IMR-90 (cell line): ENCODE measurements at regions of chr16 and their contacts with region 1.

Region 1: DNA sequence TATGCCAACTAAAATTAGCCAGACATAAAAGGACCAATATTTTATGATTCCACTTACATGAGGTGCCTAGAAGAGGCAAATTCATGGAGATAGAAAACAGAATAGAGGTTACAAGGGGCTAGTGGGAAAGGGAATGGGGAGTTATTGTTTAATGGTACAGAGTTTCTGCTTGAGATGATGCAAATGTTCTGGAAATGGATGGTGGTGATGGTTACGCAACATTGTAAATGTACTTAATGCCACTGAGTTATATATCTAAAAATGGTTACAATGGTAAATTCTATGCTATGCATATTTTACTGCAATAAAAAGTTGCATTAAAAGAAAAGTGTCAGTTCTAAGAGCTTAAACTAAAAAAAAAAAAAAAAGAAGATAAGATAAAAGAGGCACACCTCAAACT is 17.9 kb downstream of the MT1X start:
- DNase-seq: peak; percentile 16
- ATAC-seq: no peak
- H3K4me3 ChIP-seq: no peak overlapping the region
- H3K27ac ChIP-seq: no peak overlapping the region
- H3K4me1 ChIP-seq: no peaks in the 10 kb centered on the region
- H3K27me3 ChIP-seq: peaks cover 2% of the 10 kb centered on the region; the same call in 1 of the 2 replicates
- CTCF ChIP-seq: no peak
- POLR2A ChIP-seq: no peak
- RAD21 ChIP-seq: no peak

Region 2: DNA sequence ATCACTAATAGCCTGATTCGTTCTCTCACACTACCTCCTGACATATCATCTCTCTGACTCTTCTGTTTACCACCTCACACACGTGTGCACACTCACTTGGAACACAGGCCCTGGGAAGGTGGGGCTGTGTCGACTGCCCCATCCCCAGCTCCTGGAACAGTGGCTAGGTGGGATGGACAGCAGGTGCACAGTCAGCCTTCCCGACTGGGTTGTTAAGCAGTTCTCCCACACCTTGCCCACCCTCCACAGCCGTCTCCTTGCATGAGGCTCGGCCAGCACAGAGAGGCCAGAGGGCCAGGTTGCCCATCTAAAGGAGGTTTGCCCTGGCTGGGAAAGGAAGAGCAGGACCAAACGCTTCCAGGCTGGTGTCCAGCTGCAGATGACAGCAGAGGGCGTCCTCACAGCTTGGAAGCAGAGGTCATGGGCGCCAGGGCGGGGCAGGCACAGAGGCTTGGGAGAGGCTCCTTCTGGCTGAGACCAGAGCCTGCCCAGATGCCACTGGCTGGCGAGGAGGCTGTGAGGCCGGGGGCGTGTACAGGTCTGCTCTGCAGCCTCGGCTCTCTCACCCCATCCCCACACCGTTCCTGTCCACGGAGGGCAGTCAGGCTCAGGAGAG is 367.6 kb before region 1 on chr16:
- CTCF ChIA-PET with region 1: interaction called, 4 read pairs
- POLR2A ChIA-PET with region 1: no interaction called
- dilution Hi-C with region 1: no loop called
- in situ Hi-C with region 1: no loop called
- intact Hi-C with region 1: loop called (anchors 1 kb)
- DNase-seq: peak; percentile 45
- ATAC-seq: peak; percentile 93
- H3K4me3 ChIP-seq: no peak overlapping the region
- H3K27ac ChIP-seq: no peak overlapping the region
- H3K4me1 ChIP-seq: no peaks in the 10 kb centered on the region
- H3K27me3 ChIP-seq: peaks cover 2% of the 10 kb centered on the region; the same call in 1 of the 2 replicates
- CTCF ChIP-seq: peak; percentile 47
- POLR2A ChIP-seq: no peak
- RAD21 ChIP-seq: peak; percentile 52

Region 3: DNA sequence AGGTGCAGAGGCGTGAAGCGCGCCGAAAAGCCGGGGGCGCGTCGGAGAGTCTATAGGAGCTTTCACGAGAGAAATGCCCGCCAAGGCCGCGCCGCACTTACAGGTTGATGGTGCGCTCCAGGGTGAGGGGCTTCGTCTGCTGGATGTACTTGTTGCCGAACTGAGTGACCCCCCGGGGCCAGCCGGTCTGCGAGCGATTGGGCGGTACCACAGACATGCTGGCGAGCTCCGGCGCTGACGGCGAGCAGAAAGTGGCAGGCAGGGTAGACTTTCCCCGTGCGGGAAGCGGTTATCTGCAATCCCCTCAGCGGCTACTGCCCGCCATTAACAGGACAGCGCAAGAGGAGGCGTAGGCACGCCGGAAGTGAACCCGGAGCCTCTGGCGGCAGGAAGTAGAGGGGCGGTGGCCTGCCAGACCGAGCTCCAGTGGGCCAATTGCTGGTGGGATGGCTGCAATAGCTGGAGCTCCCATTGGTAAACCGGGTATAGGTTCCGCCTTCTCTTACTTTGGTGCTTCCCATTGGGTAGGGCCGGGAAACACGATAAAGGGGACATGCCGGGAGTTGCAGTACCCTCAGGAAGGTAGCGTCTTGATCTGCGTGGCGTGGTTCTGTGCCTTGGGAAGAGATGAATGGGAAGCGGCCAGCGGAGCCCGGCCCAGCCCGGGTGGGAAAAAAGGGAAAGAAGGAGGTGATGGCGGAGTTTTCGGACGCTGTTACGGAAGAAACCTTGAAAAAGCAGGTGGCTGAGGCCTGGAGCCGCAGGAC is 249.0 kb before region 1 on chr16 and contains the starts of genes NUDT21 and OGFOD1:
- CTCF ChIA-PET with region 1: no interaction called
- POLR2A ChIA-PET with region 1: no interaction called
- dilution Hi-C with region 1: no loop called
- in situ Hi-C with region 1: no loop called
- intact Hi-C with region 1: loop called (anchors 5 kb)
- DNase-seq: peak; percentile 98
- ATAC-seq: peak; percentile 98
- H3K4me3 ChIP-seq: peak within 1 kb of the TSS; percentile 77
- H3K27ac ChIP-seq: peak within 1 kb of the TSS; percentile 83
- H3K4me1 ChIP-seq: peaks cover 2% of the 10 kb centered on the region; the same call in 1 of the 2 replicates
- H3K27me3 ChIP-seq: no peaks in the 10 kb centered on the region
- CTCF ChIP-seq: no peak
- POLR2A ChIP-seq: peak; percentile 81
- RAD21 ChIP-seq: no peak
- total RNA-seq, gene NUDT21: 165 and 166 TPM in 2 replicates
- total RNA-seq, gene OGFOD1: 102 and 103 TPM in 2 replicates

Region 4: DNA sequence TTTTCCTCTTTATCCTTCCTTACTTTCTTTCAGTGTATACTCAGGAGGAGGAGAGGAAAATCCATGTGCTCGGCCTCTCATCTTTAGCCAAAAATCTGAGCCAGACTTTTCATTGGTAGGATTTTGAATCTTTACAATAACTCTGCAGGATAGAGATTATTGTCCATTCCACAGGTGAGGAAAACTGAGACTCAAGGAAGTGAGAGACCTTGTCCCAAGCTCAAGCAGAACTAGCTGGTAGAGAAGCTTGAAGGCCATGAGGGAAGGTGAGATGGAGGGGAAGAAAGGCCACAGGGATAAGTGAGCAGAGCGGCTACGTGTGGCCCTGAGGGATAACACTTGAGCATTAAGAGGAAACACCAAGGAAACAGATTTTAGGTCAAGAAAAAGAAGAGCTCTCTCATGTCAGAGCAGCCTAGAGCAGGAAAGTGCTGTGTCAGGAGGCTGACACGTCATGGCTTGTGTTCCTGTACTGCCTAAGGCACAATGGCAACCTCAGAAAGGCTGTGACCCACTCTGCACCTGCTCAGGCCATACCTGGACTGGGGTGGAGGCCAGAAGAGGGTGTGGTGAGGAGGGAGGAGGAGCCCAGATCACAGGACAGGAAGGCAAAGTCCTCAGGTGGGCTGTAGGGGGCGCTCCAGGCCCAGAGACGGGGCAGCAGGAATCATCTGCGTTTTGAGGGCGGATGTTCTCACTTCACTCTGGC is 123.5 kb before region 1 on chr16:
- CTCF ChIA-PET with region 1: interaction called, 12 read pairs
- POLR2A ChIA-PET with region 1: no interaction called
- dilution Hi-C with region 1: no loop called
- in situ Hi-C with region 1: loop called (anchors 5 kb)
- intact Hi-C with region 1: loop called (anchors 1 kb)
- DNase-seq: peak; percentile 47
- ATAC-seq: peak; percentile 80
- H3K4me3 ChIP-seq: no peak overlapping the region
- H3K27ac ChIP-seq: no peak overlapping the region
- H3K4me1 ChIP-seq: no peaks in the 10 kb centered on the region
- H3K27me3 ChIP-seq: peaks cover 8% of the 10 kb centered on the region
- CTCF ChIP-seq: peak; percentile 83
- POLR2A ChIP-seq: peak; percentile 32; the same call in 1 of the 2 replicates
- RAD21 ChIP-seq: peak; percentile 93

Region 5: GRCh38 chr16:56673921-56674320 is 26.3 kb before region 1 on chr16:
- CTCF ChIA-PET with region 1: interaction called, 10 read pairs
- POLR2A ChIA-PET with region 1: no interaction called
- dilution Hi-C with region 1: no loop called
- in situ Hi-C with region 1: no loop called
- intact Hi-C with region 1: no loop called
- DNase-seq: peak; percentile 20
- ATAC-seq: no peak
- H3K4me3 ChIP-seq: no peak overlapping the region
- H3K27ac ChIP-seq: no peak overlapping the region
- H3K4me1 ChIP-seq: peaks cover 13% of the 10 kb centered on the region
- H3K27me3 ChIP-seq: peaks cover 40% of the 10 kb centered on the region
- CTCF ChIP-seq: peak; percentile 45
- POLR2A ChIP-seq: no peak
- RAD21 ChIP-seq: peak; percentile 46

Region 6: GRCh38 chr16:57213462-57213861 is 513.3 kb after region 1 on chr16:
- CTCF ChIA-PET with region 1: no interaction called
- POLR2A ChIA-PET with region 1: no interaction called
- dilution Hi-C with region 1: no loop called
- in situ Hi-C with region 1: no loop called
- intact Hi-C with region 1: no loop called
- DNase-seq: no peak
- ATAC-seq: no peak
- H3K4me3 ChIP-seq: no peak overlapping the region
- H3K27ac ChIP-seq: no peak overlapping the region
- H3K4me1 ChIP-seq: no peaks in the 10 kb centered on the region
- H3K27me3 ChIP-seq: no peaks in the 10 kb centered on the region
- CTCF ChIP-seq: no peak
- POLR2A ChIP-seq: no peak
- RAD21 ChIP-seq: no peak